K562 (cell line): ENCODE measurements at regions of chr2 and their contacts with region 1.

Region 1: DNA sequence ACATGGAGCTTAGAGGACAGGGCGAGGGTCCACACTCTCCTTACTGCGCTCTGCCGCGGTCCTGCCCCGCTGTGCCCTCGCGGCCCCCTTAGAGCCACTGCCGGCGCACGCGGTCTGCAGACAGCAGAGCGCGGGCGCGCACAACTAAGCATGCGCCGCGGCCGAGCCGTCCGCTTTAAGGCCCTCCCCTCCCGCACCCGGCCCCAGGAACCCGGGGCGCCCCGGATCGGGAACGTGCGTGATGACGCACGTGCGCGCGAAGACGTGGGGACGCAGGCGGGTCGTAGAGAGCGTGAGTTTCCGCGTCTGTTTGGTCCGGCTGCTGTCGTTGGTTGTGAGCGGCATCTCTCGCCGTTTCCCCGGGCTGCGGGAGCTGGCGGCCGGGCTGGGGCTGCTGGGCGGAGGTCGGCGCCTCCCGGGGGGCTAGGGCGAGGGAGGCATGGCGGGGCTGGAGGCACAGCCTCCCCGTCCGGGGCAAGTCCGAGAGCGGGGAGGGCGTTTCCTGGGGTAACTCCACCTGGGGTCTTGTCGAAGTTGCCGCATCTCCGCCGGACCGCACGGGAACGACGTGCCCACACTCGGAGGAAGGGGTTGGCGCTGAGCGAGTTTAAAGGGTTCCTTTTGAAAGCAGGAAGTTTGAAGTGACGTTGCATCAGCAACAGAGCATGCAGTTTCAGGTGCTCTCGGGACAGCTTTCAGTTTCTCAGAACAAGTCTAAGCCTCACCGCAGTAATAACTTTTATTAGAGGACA is at the start of gene RHBDD1:
- DNase-seq: peak; percentile 79 to 95 (median 86)
- ATAC-seq: peak; percentile 81
- H3K4me3 ChIP-seq: peak within 1 kb of the TSS; percentile 75
- H3K27ac ChIP-seq: peak within 1 kb of the TSS; percentile 100
- H3K4me1 ChIP-seq: peaks cover 9% of the 10 kb centered on the region in 2 experiments
- H3K27me3 ChIP-seq: no peaks in the 10 kb centered on the region
- CTCF ChIP-seq: no peak
- EP300 ChIP-seq: no peak; the same call in 1 of the 2 replicates
- POLR2A ChIP-seq: peak; percentile 88; the same call in 1 of the 2 replicates
- RAD21 ChIP-seq: no peak
- polyA plus RNA-seq, gene RHBDD1: 9.1 to 14.2 TPM

Region 2: GRCh38 chr2:226825056-226825455 is 10.9 kb before region 1 on chr2:
- CTCF ChIA-PET with region 1: no interaction called
- POLR2A ChIA-PET with region 1: interaction called, 15 read pairs
- in situ Hi-C with region 1: no loop called
- intact Hi-C with region 1: no loop called
- DNase-seq: no peak
- ATAC-seq: no peak
- H3K4me3 ChIP-seq: no peak overlapping the region
- H3K27ac ChIP-seq: no peak overlapping the region
- H3K4me1 ChIP-seq: no peaks in the 10 kb centered on the region
- H3K27me3 ChIP-seq: no peaks in the 10 kb centered on the region
- CTCF ChIP-seq: no peak
- EP300 ChIP-seq: no peak
- POLR2A ChIP-seq: no peak
- RAD21 ChIP-seq: no peak

Region 3: GRCh38 chr2:226979004-226979403 is 143.0 kb after region 1 on chr2:
- CTCF ChIA-PET with region 1: no interaction called
- POLR2A ChIA-PET with region 1: no interaction called
- in situ Hi-C with region 1: no loop called
- intact Hi-C with region 1: loop called (anchors 1 kb)
- DNase-seq: peak; percentile 17 to 84 (median 42)
- ATAC-seq: peak; percentile 94
- H3K4me3 ChIP-seq: no peak overlapping the region
- H3K27ac ChIP-seq: peak overlapping the region; percentile 76
- H3K4me1 ChIP-seq: peaks cover 11 to 46% of the 10 kb centered on the region in 2 experiments
- H3K27me3 ChIP-seq: no peaks in the 10 kb centered on the region
- CTCF ChIP-seq: peak; percentile 58 to 69 (median 62)
- EP300 ChIP-seq: peak; percentile 26; the same call in 1 of the 2 replicates
- POLR2A ChIP-seq: no peak
- RAD21 ChIP-seq: peak; percentile 26 to 49; a peak in 3 of 4 replicates